ENCODE measurements at regions of chr7 and their contacts with region 1.

Region 1: GRCh38 chr7:50369143-50370026 is 64.9 kb downstream of the IKZF1 start:
- DNase-seq: peak; percentile 62
- ATAC-seq: no peak
- H3K4me3 Mint-ChIP-seq: peak overlapping the region; percentile 10
- H3K27ac Mint-ChIP-seq: peak overlapping the region; percentile 88
- H3K4me1 Mint-ChIP-seq: peaks cover 96% of the 10 kb centered on the region
- H3K27me3 Mint-ChIP-seq: no peaks in the 10 kb centered on the region

Region 2: GRCh38 chr7:50022991-50023390 is 346.4 kb before region 1 on chr7:
- CTCF ChIA-PET with region 1: no interaction called
- POLR2A ChIA-PET with region 1: no interaction called
- intact Hi-C with region 1: no loop called
- DNase-seq: no peak
- ATAC-seq: no peak
- H3K4me3 Mint-ChIP-seq: no peak overlapping the region
- H3K27ac Mint-ChIP-seq: no peak overlapping the region
- H3K4me1 Mint-ChIP-seq: no peaks in the 10 kb centered on the region
- H3K27me3 Mint-ChIP-seq: peaks cover 12% of the 10 kb centered on the region

Region 3: GRCh38 chr7:50147951-50148808 is 221.2 kb before region 1 on chr7:
- CTCF ChIA-PET with region 1: interaction called, 8 read pairs
- POLR2A ChIA-PET with region 1: interaction called, 4 read pairs
- intact Hi-C with region 1: loop called in 1 of 2 experiments (anchors 1 kb)
- DNase-seq: peak; percentile 65
- ATAC-seq: peak; percentile 89
- H3K4me3 Mint-ChIP-seq: peak overlapping the region; percentile 40
- H3K27ac Mint-ChIP-seq: peak overlapping the region; percentile 90
- H3K4me1 Mint-ChIP-seq: peaks cover 85% of the 10 kb centered on the region
- H3K27me3 Mint-ChIP-seq: no peaks in the 10 kb centered on the region

Region 4: DNA sequence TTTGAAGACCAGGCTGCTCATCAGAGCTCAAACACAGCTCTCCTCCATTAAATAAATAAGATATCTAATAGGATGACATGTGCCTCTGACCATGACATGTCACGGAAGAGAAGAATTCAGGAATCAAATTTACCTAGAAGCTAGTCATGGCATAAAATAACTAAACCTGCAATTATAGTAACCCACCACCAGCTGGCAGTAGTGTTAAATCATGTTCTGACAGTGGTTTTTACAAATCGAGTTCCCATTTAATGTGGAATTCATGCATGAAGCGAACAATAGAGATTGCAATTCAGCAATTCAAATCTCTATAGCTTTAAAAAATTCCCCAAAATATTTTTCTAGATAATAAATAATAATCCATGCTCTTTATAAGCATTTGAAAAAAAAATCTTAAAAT is 139.4 kb before region 1 on chr7:
- CTCF ChIA-PET with region 1: interaction called, 15 read pairs
- POLR2A ChIA-PET with region 1: interaction called, 7 read pairs
- intact Hi-C with region 1: no loop called
- DNase-seq: no peak
- ATAC-seq: no peak
- H3K4me3 Mint-ChIP-seq: no peak overlapping the region
- H3K27ac Mint-ChIP-seq: no peak overlapping the region
- H3K4me1 Mint-ChIP-seq: peaks cover 37% of the 10 kb centered on the region
- H3K27me3 Mint-ChIP-seq: no peaks in the 10 kb centered on the region

Region 5: DNA sequence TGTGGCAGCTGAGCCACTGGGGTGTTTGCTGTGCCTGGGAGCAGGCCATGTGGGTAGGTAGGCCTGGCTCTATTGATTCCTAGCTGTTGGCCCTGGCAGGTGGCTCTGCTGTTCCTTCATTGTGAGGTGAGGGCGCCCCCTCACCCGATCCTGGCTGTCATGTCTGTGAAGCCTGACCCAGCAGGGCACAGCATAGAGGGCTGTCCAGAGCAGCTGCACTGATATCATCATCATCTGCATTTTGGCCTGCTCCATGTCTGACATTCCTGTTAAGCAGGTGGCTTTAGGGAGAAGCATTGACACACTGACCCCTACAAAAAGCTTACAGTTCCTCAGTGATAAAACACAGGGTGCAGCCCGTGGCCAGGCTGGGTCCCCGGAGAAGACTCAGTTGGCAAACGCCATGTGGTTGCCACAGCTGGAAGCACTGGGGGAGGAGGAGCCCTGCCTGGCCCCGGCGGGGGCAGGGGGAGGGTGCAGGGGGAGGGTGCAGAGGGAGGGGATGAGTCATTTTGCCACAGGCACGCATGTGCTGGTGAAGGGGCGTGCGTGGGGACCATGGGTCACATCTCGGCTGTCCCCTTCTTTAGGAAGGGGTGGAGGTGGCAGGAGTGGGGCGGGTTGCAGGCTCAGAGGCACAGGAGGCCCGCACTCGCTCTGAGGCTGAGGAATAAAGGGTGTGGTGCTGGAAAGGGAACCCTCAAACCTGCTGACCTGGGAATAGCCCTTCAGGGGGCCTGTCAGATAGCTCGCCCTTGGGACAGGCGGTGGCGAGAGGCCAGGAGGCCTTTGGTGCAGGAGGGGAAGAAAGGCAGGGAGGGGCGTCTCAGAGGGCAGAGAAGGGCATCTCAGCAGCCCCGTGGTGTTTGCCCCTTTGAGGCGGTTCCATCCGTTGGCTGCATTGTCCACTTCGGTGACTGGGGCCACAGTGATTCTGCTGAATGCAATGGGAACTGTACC is 33.3 kb before region 1 on chr7:
- CTCF ChIA-PET with region 1: interaction called, 214 read pairs
- POLR2A ChIA-PET with region 1: interaction called, 33 read pairs
- intact Hi-C with region 1: loop called (anchors 1 to 5 kb)
- DNase-seq: peak; percentile 93
- ATAC-seq: peak; percentile 34
- H3K4me3 Mint-ChIP-seq: no peak overlapping the region
- H3K27ac Mint-ChIP-seq: no peak overlapping the region
- H3K4me1 Mint-ChIP-seq: peaks cover 2% of the 10 kb centered on the region
- H3K27me3 Mint-ChIP-seq: no peaks in the 10 kb centered on the region

Region 6: GRCh38 chr7:50397320-50397970 is 28.1 kb after region 1 on chr7:
- CTCF ChIA-PET with region 1: interaction called, 5 read pairs
- POLR2A ChIA-PET with region 1: interaction called, 3 read pairs
- intact Hi-C with region 1: loop called (anchors 1 kb)
- DNase-seq: peak; percentile 63
- ATAC-seq: peak; percentile 12
- H3K4me3 Mint-ChIP-seq: peak overlapping the region; percentile 26
- H3K27ac Mint-ChIP-seq: peak overlapping the region; percentile 82
- H3K4me1 Mint-ChIP-seq: peaks cover 80% of the 10 kb centered on the region
- H3K27me3 Mint-ChIP-seq: no peaks in the 10 kb centered on the region

Measured in activated CD4-positive, alpha-beta T cell treated with anti-CD3 and anti-CD28 coated beads for 36 hours (primary cell).